ENCODE measurements at regions of chr12 and their contacts with region 1.

Region 1: DNA sequence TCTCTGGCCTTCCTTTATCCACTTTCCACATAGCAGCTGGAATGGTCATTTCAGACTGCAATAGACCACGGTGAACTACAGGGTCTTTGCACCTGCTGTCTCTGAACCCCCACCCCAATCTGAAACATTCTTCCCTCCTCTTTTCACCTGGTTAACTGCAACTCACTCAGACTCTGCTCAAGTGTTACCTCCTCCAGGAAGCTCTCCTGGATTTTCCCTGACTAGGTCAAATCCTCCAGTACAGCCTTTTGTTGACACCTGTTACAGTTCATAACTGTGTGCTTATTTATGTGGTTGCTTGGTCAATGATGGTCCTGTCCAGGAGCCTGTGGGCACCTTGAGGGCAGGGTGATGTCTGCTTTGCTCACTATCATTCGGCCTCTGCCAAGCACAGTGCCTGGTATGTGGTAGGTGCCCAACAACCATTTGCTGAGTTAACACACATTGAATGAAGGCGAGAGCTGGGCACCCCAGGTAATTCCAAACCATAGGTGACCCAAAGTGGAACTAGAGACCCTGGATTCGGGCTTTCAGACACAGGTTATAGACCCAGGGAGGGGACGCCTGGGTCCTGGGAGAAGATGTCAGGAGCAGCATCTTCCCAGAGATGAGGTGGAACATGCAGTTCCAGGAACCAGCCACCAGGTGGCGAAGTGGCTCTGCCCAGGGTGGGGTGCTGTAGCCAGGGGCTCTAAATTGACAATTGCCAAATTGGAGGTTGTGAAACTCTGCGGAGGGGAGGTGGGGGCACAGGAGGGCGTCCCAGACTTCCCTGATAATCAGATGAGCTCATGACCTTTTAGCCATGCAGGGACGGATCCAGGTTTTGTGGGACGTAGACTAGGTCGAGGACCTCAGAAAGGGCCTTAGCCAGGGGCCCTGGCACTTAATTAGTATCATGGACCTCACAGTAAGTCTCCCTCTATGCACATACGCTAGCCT is 28.1 kb downstream of the TRPV4 start:
- DNase-seq: peak; percentile 77
- H3K4me3 Mint-ChIP-seq: no peak overlapping the region
- H3K27ac Mint-ChIP-seq: no peak overlapping the region
- H3K4me1 Mint-ChIP-seq: no peaks in the 10 kb centered on the region
- H3K27me3 Mint-ChIP-seq: no peaks in the 10 kb centered on the region

Region 2: GRCh38 chr12:109839444-109839843 is 34.4 kb after region 1 on chr12:
- CTCF ChIA-PET with region 1: interaction called, 92 read pairs
- POLR2A ChIA-PET with region 1: no interaction called
- intact Hi-C with region 1: no loop called
- DNase-seq: no peak
- H3K4me3 Mint-ChIP-seq: no peak overlapping the region
- H3K27ac Mint-ChIP-seq: no peak overlapping the region
- H3K4me1 Mint-ChIP-seq: no peaks in the 10 kb centered on the region
- H3K27me3 Mint-ChIP-seq: peaks cover 4% of the 10 kb centered on the region

Region 3: DNA sequence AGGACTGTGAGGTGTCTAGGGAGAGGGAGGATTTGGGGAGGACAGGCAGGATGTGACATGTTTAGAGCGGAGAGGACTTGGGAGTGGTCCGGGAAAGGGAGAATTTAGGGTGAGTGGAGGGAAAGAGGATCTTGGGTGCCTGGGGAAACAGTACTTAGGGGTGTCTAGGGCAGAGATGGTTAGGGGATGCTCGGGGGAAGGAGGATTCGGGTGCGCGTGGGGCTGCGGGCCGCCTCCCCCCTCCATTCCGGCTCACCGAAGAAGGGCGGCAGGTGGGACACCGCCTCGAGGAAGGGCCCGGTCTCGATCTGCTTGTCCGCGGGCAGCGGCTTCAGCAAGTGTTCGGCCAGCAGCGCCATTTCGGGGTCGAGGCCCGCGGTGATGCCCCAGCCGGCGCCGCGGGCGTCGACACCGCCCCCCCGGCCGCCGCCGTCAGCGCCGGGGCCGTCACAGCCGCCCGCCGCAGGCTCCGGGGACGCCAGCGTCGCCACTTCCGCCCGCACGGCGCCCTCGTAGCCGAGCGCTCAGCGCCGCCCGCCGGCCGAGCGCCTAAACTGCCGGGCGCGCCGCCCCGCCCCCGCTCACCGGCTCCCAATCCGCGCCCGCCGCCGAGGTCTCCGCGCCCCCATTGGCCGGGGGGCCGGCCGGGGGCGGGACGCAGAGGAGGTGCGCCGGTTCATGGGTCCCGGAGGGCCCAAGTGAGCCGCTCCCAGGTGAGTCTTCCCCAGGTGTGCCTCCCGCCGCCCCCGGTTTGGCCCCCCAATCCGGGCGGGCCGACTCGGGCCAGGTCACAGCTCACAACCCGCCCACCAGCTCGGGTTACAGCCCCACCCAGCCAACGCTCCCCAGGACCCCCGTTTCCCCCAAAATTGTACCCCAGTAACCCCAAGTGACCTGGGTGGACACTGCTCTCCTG is 75.2 kb after region 1 on chr12 and contains the start of gene GLTP:
- CTCF ChIA-PET with region 1: interaction called, 20 read pairs
- POLR2A ChIA-PET with region 1: no interaction called
- intact Hi-C with region 1: loop called (anchors 1 kb)
- DNase-seq: peak; percentile 91
- H3K4me3 Mint-ChIP-seq: peak within 1 kb of the TSS; percentile 94
- H3K27ac Mint-ChIP-seq: peak within 1 kb of the TSS; percentile 79
- H3K4me1 Mint-ChIP-seq: peaks cover 45% of the 10 kb centered on the region
- H3K27me3 Mint-ChIP-seq: no peaks in the 10 kb centered on the region
- total RNA-seq, gene GLTP: 20.9 to 21.1 TPM

Region 4: GRCh38 chr12:109888179-109889020 is 83.3 kb after region 1 on chr12:
- CTCF ChIA-PET with region 1: interaction called, 11 read pairs
- POLR2A ChIA-PET with region 1: no interaction called
- intact Hi-C with region 1: no loop called
- DNase-seq: peak; percentile 66
- H3K4me3 Mint-ChIP-seq: peak overlapping the region; percentile 27
- H3K27ac Mint-ChIP-seq: peak overlapping the region; percentile 94
- H3K4me1 Mint-ChIP-seq: peaks cover 38% of the 10 kb centered on the region
- H3K27me3 Mint-ChIP-seq: no peaks in the 10 kb centered on the region

Measured in activated CD4-positive, alpha-beta memory T cell treated with anti-CD3 and anti-CD28 coated beads for 36 hours (primary cell).